ENCODE measurements at regions of chr9 and their contacts with region 1.

Region 1: GRCh38 chr9:36102742-36103495 is 33.6 kb upstream of the GLIPR2 start:
- DNase-seq: peak; percentile 91
- ATAC-seq: peak; percentile 100
- H3K4me3 Mint-ChIP-seq: no peak overlapping the region
- H3K27ac Mint-ChIP-seq: no peak overlapping the region
- H3K4me1 Mint-ChIP-seq: peaks cover 10% of the 10 kb centered on the region
- H3K27me3 Mint-ChIP-seq: no peaks in the 10 kb centered on the region

Region 2: DNA sequence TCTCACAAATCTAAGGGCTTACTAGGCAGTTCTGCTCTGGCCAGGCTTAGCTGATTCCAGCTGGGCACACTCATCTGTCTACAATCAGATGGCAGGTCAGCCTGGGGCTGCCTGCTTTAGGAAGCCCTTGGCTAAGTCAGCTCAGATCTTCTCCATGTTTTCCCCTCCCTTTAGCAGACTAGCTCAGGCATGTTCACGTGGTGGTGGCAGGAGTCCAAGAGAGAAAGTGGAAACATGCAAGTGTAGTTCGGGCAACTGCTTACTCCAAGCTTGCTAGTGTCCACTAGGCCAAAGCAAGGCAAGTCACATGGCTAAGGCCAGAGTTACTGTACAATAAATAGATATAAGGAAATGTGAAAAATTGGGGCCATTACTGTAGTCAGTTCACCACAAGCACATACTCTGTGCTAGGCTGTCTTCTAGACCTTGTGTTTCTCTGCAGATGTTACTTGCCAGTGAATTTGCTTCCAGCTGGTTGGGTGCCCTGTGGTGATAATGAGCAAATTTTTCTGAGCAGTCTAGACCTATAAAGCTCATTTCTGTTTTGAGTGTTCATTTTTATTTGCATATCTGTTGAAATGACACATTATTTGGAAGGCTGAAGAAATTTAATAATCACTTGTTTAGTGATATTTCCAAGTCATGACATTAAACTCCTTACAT is 27.9 kb before region 1 on chr9:
- CTCF ChIA-PET with region 1: interaction called, 27 read pairs
- POLR2A ChIA-PET with region 1: interaction called, 3 read pairs
- DNase-seq: no peak
- ATAC-seq: no peak
- H3K4me3 Mint-ChIP-seq: no peak overlapping the region
- H3K27ac Mint-ChIP-seq: no peak overlapping the region
- H3K4me1 Mint-ChIP-seq: no peaks in the 10 kb centered on the region
- H3K27me3 Mint-ChIP-seq: no peaks in the 10 kb centered on the region

Region 3: DNA sequence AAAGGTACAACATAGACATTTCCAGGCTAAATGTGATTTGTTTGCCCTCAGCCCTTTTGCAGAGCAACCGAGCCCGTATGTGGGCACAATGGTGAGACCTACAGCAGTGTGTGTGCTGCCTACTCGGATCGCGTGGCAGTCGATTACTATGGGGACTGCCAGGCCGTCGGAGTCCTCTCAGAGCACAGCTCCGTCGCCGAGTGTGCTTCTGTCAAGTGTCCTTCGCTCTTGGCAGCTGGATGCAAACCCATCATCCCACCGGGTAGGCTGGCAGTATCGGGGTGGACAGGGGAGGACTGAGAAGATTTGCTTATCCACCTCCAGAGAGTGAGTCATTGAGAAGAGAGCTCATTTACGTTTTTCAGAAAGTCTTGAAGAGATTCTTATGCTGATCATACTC is 15.8 kb after region 1 on chr9:
- CTCF ChIA-PET with region 1: interaction called, 42 read pairs
- POLR2A ChIA-PET with region 1: no interaction called
- DNase-seq: no peak
- ATAC-seq: no peak
- H3K4me3 Mint-ChIP-seq: no peak overlapping the region
- H3K27ac Mint-ChIP-seq: no peak overlapping the region
- H3K4me1 Mint-ChIP-seq: no peaks in the 10 kb centered on the region
- H3K27me3 Mint-ChIP-seq: no peaks in the 10 kb centered on the region

Region 4: DNA sequence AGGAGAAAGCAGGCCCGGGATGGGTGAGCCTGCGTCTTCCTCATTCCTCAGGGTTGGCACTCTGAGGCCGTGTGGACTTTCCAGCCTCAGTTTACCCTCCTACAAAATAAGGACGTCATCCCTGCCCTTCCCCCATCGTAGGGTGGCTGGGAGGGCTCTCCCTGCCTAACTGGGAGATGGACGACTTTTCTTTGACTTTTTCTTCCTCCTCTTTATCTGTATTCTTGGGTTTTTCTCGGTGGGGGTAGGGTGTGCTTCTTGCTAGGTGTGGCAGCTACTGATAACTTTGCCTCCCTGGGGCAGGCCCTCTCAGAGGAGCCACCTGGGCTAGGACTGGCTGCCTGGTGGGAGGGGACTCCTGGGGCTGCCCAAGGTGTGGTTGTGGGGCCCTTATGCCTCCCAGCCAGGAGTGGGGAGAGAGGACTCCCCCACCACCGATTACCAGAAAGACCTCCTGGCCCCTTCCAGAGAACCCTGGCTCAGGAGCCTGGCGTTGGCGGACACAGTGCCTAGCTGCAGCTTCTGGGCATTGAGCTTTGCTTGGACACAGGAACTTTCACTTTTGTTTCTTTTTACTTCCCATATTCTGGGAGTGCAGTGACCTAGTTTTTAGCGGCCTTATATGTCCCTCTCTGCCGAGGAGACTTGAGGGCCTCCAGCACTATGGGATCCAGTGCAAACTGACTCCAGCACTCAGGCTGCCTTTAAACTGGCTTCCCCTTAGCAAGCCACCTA is 39.8 kb after region 1 on chr9:
- CTCF ChIA-PET with region 1: interaction called, 66 read pairs
- POLR2A ChIA-PET with region 1: no interaction called
- DNase-seq: no peak
- ATAC-seq: peak; percentile 16
- H3K4me3 Mint-ChIP-seq: peak overlapping the region; percentile 79
- H3K27ac Mint-ChIP-seq: peak overlapping the region; percentile 91
- H3K4me1 Mint-ChIP-seq: peaks cover 96% of the 10 kb centered on the region
- H3K27me3 Mint-ChIP-seq: peaks cover 3% of the 10 kb centered on the region

Region 5: DNA sequence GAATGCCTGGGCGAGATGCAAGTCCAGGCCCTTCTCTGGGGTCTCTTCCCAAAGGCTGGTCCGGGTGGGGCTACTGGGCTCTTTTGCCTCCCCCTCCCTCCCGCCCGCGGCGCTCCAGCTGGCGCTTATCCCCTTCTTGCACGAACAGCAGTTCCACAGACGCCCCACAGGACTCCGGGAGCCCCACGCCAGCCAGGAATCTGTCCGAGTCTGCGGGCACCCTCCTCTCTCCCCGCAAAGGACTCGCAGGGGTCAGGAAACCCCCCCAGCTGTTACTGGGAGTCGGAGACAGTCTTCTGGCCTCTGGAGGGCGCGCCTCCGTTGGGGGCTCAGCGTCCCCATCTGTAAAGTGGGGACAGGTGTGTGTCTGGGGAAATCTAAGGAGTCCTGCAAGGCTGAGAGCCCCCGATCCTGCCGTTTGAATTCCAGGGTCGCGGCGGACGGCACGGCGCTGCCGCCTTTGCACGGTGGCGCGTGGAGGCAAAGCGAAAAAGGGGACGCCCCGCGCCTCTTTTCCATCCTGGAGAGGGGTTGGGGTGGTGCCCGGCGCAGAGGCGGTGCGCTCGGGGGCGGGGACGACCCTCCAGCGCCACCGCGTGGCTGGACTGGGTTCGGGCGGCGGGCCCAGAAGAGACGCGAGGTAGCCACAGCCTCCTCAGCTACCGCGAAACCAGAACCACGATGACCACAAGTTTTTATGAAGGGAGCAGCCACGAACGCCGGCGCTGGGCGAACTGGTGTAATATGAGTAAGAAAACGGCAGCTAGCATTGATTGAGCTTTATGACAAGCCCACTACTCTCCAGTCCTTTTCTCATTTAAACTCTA is 63.4 kb after region 1 on chr9:
- CTCF ChIA-PET with region 1: interaction called, 304 read pairs
- POLR2A ChIA-PET with region 1: interaction called, 3 read pairs
- DNase-seq: peak; percentile 88
- ATAC-seq: peak; percentile 98
- H3K4me3 Mint-ChIP-seq: peak overlapping the region; percentile 72
- H3K27ac Mint-ChIP-seq: peak overlapping the region; percentile 69
- H3K4me1 Mint-ChIP-seq: peaks cover 19% of the 10 kb centered on the region
- H3K27me3 Mint-ChIP-seq: peaks cover 14% of the 10 kb centered on the region

Region 6: GRCh38 chr9:36284226-36284625 is 181.3 kb after region 1 on chr9:
- CTCF ChIA-PET with region 1: no interaction called
- POLR2A ChIA-PET with region 1: no interaction called
- DNase-seq: no peak
- ATAC-seq: no peak
- H3K4me3 Mint-ChIP-seq: no peak overlapping the region
- H3K27ac Mint-ChIP-seq: no peak overlapping the region
- H3K4me1 Mint-ChIP-seq: peaks cover 4% of the 10 kb centered on the region
- H3K27me3 Mint-ChIP-seq: no peaks in the 10 kb centered on the region

Region 7: GRCh38 chr9:36400332-36401163 is 297.6 kb after region 1 on chr9:
- CTCF ChIA-PET with region 1: no interaction called
- POLR2A ChIA-PET with region 1: no interaction called
- DNase-seq: peak; percentile 91
- ATAC-seq: peak; percentile 80
- H3K4me3 Mint-ChIP-seq: peak overlapping the region; percentile 91
- H3K27ac Mint-ChIP-seq: peak overlapping the region; percentile 95
- H3K4me1 Mint-ChIP-seq: peaks cover 42% of the 10 kb centered on the region
- H3K27me3 Mint-ChIP-seq: no peaks in the 10 kb centered on the region

Measured in activated CD8-positive, alpha-beta T cell treated with anti-CD3 and anti-CD28 coated beads, Interleukin-2, amount 10 ng/mL, durations not matched to agents 7 days and 5 days (primary cell).